Calu3 (cell line): ENCODE measurements at regions of chrX and their contacts with region 1.

Region 1: GRCh38 chrX:78066110-78066509 is 37.9 kb upstream of the PGK1 start:
- DNase-seq: no peak
- H3K4me3 Mint-ChIP-seq: peak overlapping the region; percentile 19
- H3K27ac Mint-ChIP-seq: peak overlapping the region; percentile 94
- H3K4me1 Mint-ChIP-seq: peaks cover 62% of the 10 kb centered on the region
- H3K27me3 Mint-ChIP-seq: no peaks in the 10 kb centered on the region
- CTCF ChIP-seq: no peak

Region 2: DNA sequence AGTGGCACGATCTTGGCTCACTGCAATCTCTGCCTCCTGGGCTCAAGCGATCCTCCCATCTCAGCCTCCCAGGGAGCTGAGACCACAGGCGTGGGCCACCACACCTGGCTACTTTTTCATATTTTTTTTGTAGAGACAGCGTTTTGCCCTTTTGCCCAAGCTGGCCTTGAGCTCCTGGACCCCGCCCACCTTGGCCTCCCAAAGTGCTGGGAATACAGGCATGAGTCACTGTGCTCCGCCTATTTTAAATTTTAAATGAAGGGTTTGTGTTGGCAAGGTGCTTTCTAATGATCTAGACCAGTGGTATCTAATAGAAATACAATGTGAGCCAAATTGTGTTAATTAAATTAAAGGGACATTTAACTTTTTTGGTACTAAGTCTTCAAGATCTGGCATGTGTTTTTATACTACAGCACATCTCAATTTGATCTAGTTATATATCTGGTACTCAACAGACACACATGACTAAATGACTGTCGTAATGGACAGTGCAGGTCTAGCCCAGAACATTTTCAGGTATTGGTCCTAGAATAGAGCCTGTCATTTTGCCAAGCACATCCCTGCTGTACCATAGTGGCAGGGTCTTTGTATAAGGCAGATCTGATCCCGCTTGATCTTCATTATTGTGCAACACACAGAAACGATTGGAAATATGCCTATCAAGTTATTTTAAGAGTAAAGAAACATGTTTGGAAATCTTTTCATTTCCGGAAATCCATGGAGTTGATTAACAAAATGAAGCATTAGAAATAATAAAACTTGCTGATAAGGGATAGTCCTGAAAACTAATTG is 45.2 kb after region 1 on chrX:
- CTCF ChIA-PET with region 1: no interaction called
- intact Hi-C with region 1: loop called (anchors 5 kb)
- DNase-seq: peak; percentile 26
- H3K4me3 Mint-ChIP-seq: no peak overlapping the region
- H3K27ac Mint-ChIP-seq: no peak overlapping the region
- H3K4me1 Mint-ChIP-seq: peaks cover 26% of the 10 kb centered on the region
- H3K27me3 Mint-ChIP-seq: no peaks in the 10 kb centered on the region
- CTCF ChIP-seq: no peak

Region 3: DNA sequence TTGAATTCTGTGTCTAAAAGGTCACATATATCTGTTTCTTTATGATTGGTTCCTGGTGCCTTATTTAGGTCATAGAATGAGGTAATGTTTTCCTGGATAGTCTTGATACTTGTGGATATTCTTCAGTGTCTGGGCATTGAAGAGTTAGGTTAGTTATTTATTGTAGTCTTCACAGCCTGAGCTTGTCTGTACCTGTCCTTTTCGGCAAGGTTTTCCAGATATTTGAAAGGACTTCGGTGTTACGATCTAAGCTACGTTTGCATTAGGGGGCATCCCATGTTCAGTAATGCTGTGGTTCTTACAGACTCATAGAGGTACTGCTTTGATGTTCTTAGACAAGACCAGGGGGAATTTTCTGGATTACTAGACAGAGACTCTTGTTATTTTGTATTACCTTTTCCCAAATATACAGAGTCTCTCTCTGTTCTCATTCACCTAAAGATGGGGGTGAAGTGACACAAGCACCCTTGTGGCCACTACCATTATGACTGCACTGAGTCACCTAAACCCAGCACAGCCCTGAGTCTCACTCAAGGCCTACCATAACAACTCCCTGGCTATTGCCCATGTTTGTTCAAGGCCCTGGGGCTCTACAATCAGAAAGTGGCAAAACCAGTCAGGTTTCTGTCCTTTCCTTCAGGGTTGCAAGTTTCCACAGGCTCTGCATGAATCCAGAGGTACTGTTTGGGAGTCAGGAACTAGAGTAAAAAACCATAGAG is 291.4 kb after region 1 on chrX:
- CTCF ChIA-PET with region 1: no interaction called
- intact Hi-C with region 1: no loop called
- DNase-seq: no peak
- H3K4me3 Mint-ChIP-seq: no peak overlapping the region
- H3K27ac Mint-ChIP-seq: no peak overlapping the region
- H3K4me1 Mint-ChIP-seq: no peaks in the 10 kb centered on the region
- H3K27me3 Mint-ChIP-seq: no peaks in the 10 kb centered on the region
- CTCF ChIP-seq: no peak